CD4-positive, alpha-beta T cell (primary cell): ENCODE measurements at regions of chr2 and their contacts with region 1.

Region 1: GRCh38 chr2:84905181-84906107 is at the start of gene TMSB10:
- DNase-seq: peak; percentile 84 to 95 (median 92)
- ATAC-seq: peak; percentile 70
- H3K4me3 ChIP-seq: peak within 1 kb of the TSS; percentile 74
- H3K4me3 Mint-ChIP-seq: peak within 1 kb of the TSS; percentile 98
- H3K27ac ChIP-seq: peak within 1 kb of the TSS; percentile 57 to 85
- H3K27ac Mint-ChIP-seq: peak within 1 kb of the TSS; percentile 93
- H3K4me1 ChIP-seq: peaks cover 42% of the 10 kb centered on the region
- H3K4me1 Mint-ChIP-seq: peaks cover 76% of the 10 kb centered on the region
- H3K27me3 ChIP-seq: no peaks in the 10 kb centered on the region
- H3K27me3 Mint-ChIP-seq: no peaks in the 10 kb centered on the region
- CTCF ChIP-seq: no peak
- total RNA-seq, gene TMSB10: 1,969 to 2,001 TPM

Region 2: DNA sequence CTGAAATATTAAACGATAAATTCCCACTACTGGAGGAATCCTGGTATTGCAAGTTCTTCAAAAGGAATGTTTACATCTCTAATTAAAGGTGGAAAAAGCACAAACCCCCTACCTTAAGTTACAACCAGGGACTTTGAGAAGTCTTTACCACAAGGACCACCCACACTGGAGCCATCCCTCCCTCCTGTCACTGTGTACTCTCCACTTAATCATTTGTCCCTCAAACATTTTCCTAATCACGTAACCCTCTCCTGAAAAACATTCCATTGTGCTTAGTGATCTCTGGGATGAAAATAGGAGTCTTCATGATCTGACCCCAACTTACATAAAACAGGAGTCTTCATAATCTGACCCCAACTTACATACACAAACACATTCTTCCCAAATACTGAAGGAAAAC is 532.1 kb before region 1 on chr2:
- CTCF ChIA-PET with region 1: no interaction called
- POLR2A ChIA-PET with region 1: no interaction called
- intact Hi-C with region 1: no loop called
- DNase-seq: no peak
- ATAC-seq: no peak
- H3K4me3 ChIP-seq: no peak overlapping the region
- H3K4me3 Mint-ChIP-seq: no peak overlapping the region
- H3K27ac ChIP-seq: no peak overlapping the region
- H3K27ac Mint-ChIP-seq: no peak overlapping the region
- H3K4me1 ChIP-seq: no peaks in the 10 kb centered on the region
- H3K4me1 Mint-ChIP-seq: no peaks in the 10 kb centered on the region
- H3K27me3 ChIP-seq: peaks cover 2 to 13% of the 10 kb centered on the region in 2 experiments
- H3K27me3 Mint-ChIP-seq: peaks cover 31% of the 10 kb centered on the region
- CTCF ChIP-seq: no peak

Region 3: DNA sequence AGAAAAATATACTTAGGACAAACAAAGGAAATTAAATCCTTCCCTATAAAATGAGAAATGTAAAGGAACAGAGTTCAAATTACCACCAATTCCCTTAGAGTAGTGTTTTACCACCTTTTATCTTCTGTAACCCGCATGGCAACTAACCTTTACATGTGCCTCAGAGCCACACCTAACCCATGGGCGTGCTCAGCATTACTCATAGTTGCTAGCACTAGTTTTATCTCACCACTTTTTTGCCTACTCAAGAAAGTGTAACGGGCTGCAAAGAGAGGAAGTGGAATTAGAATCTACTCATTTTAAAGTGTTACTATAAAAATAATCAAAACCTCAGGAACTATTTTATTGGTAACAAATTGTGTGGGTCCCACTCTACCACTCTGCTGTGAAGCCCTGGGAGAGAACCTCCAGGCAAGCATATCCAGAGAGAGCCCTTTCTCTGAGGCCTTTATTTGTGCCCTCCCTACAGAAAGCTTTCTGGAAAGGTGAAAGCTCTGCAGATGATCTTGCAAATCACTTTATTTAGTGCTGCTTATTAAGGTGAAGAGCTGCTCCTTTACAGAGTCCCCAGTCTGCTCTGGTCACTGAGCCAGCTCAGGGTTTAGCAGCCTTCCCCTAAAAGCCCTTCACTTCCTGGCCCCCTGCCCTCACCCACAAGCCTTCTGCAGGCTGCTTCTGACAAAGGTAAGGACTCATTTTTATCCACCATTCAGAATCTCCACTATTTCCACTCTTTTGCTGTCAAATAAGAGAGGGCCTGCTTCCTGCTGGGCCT is 123.3 kb before region 1 on chr2:
- CTCF ChIA-PET with region 1: no interaction called
- POLR2A ChIA-PET with region 1: interaction called, 10 read pairs
- intact Hi-C with region 1: no loop called
- DNase-seq: peak; percentile 25 to 91 (median 57)
- ATAC-seq: peak; percentile 83
- H3K4me3 ChIP-seq: no peak overlapping the region
- H3K4me3 Mint-ChIP-seq: peak overlapping the region; percentile 81
- H3K27ac ChIP-seq: peak overlapping the region; percentile 67 to 70
- H3K27ac Mint-ChIP-seq: peak overlapping the region; percentile 90
- H3K4me1 ChIP-seq: peaks cover 47% of the 10 kb centered on the region
- H3K4me1 Mint-ChIP-seq: peaks cover 93% of the 10 kb centered on the region
- H3K27me3 ChIP-seq: no peaks in the 10 kb centered on the region
- H3K27me3 Mint-ChIP-seq: no peaks in the 10 kb centered on the region
- CTCF ChIP-seq: no peak

Region 4: GRCh38 chr2:84846041-84846663 is 59.3 kb before region 1 on chr2:
- CTCF ChIA-PET with region 1: no interaction called
- POLR2A ChIA-PET with region 1: interaction called, 37 read pairs
- intact Hi-C with region 1: no loop called
- DNase-seq: peak in 9 of 14 experiments; percentile 22 to 87 (median 60)
- ATAC-seq: peak; percentile 66
- H3K4me3 ChIP-seq: no peak overlapping the region
- H3K4me3 Mint-ChIP-seq: peak overlapping the region; percentile 84
- H3K27ac ChIP-seq: peak overlapping the region; percentile 81 to 90
- H3K27ac Mint-ChIP-seq: peak overlapping the region; percentile 96
- H3K4me1 ChIP-seq: peaks cover 100% of the 10 kb centered on the region
- H3K4me1 Mint-ChIP-seq: peaks cover 95% of the 10 kb centered on the region
- H3K27me3 ChIP-seq: no peaks in the 10 kb centered on the region
- H3K27me3 Mint-ChIP-seq: no peaks in the 10 kb centered on the region
- CTCF ChIP-seq: no peak

Region 5: GRCh38 chr2:84865181-84865783 is 40.2 kb before region 1 on chr2:
- CTCF ChIA-PET with region 1: no interaction called
- POLR2A ChIA-PET with region 1: interaction called, 14 read pairs
- intact Hi-C with region 1: no loop called
- DNase-seq: peak in 5 of 14 experiments; percentile 15 to 73 (median 71)
- ATAC-seq: peak; percentile 65
- H3K4me3 ChIP-seq: no peak overlapping the region
- H3K4me3 Mint-ChIP-seq: peak overlapping the region; percentile 42
- H3K27ac ChIP-seq: peak overlapping the region in 1 of 2 donors; percentile 36
- H3K27ac Mint-ChIP-seq: peak overlapping the region; percentile 94
- H3K4me1 ChIP-seq: peaks cover 70% of the 10 kb centered on the region
- H3K4me1 Mint-ChIP-seq: peaks cover 97% of the 10 kb centered on the region
- H3K27me3 ChIP-seq: no peaks in the 10 kb centered on the region
- H3K27me3 Mint-ChIP-seq: no peaks in the 10 kb centered on the region
- CTCF ChIP-seq: peak; percentile 75

Region 6: DNA sequence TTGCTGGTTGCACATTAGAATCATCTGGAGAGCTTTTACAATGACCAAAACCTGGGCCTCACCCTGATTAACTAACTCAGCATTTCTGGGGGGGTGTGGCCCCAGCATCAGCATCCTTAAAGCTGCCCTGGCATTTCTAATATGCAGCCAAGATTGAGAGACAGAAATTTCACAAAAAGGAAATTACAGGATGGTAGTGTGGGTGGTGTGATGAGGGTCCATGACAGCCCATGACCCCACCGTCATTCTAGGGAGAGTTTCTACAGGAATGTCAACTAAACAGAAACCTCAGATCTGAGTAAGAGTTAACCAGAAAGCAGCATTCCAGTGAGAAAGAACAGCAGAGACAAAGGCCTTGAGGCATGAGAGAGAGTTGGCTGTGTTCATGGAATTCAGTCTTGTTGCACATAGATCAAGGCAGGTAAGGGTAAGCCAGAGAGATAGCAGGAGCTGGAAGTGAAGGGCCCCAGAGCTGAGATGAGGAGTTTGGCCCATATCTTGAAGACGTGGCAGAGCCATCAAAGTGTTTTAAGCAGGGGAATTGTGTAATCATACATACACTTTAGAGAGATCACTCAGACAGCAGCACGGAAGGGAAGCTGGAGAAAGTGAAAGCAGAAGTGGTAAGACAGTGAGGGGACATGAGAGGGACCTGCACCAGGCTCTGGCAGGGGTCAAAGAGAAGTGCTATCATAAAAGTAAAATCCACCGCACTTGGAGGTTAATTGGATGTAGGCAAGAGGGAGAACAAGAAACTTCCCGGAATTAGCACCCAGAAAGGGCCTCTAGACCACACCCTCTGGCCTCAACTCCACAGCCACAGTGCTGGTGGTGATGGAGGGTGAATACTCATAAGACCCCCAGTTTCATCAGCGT is 16.8 kb before region 1 on chr2:
- CTCF ChIA-PET with region 1: interaction called, 4 read pairs
- POLR2A ChIA-PET with region 1: interaction called, 215 read pairs
- intact Hi-C with region 1: loop called (anchors 2 kb)
- DNase-seq: peak in 10 of 14 experiments; percentile 29 to 89 (median 54)
- ATAC-seq: peak; percentile 95
- H3K4me3 ChIP-seq: peak overlapping the region; percentile 29
- H3K4me3 Mint-ChIP-seq: peak overlapping the region; percentile 77
- H3K27ac ChIP-seq: peak overlapping the region; percentile 75 to 76
- H3K27ac Mint-ChIP-seq: peak overlapping the region; percentile 93
- H3K4me1 ChIP-seq: peaks cover 28% of the 10 kb centered on the region
- H3K4me1 Mint-ChIP-seq: peaks cover 46% of the 10 kb centered on the region
- H3K27me3 ChIP-seq: no peaks in the 10 kb centered on the region
- H3K27me3 Mint-ChIP-seq: no peaks in the 10 kb centered on the region
- CTCF ChIP-seq: no peak

Region 7: DNA sequence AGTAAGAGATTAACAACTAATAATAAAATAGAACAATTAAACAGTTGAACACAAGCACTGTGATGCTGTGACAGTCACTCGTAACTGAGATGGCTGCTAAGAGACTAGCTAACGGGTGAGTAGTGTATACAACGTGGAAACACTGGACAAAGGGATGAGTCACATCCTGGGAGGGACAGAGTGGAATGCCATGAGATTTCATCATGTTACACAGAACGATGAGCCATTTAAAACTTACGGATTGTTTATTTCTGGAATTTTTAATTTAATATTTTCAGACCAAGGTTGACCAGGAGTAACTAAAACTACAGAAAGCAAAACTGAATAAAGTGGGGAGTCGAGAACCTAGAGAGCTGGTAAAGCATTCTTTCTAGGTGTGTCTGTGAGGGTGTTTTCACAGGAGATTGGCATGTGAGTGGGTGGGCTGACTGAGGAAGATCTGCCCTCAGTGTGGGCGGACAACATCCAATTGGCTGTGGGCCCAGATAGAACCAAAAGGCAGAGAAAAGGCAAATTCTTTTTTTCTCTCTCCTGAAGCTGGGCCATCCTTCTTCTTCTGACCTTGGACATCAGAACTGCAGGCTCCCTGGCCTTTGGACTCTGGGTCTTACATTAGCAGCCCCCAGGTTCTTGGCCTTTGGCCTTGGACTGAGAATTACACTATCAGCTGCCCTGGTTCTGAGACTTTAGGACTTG is 14.6 kb after region 1 on chr2:
- CTCF ChIA-PET with region 1: interaction called, 88 read pairs
- POLR2A ChIA-PET with region 1: interaction called, 147 read pairs
- intact Hi-C with region 1: loop called (anchors 1 kb)
- DNase-seq: peak in 4 of 14 experiments; percentile 37 to 60 (median 52)
- ATAC-seq: peak; percentile 63
- H3K4me3 ChIP-seq: no peak overlapping the region
- H3K4me3 Mint-ChIP-seq: peak overlapping the region; percentile 23
- H3K27ac ChIP-seq: peak overlapping the region; percentile 54 to 61
- H3K27ac Mint-ChIP-seq: peak overlapping the region; percentile 81
- H3K4me1 ChIP-seq: peaks cover 40% of the 10 kb centered on the region
- H3K4me1 Mint-ChIP-seq: peaks cover 43% of the 10 kb centered on the region
- H3K27me3 ChIP-seq: no peaks in the 10 kb centered on the region
- H3K27me3 Mint-ChIP-seq: no peaks in the 10 kb centered on the region
- CTCF ChIP-seq: no peak

Region 8: GRCh38 chr2:84946204-84947009 is 41.0 kb after region 1 on chr2:
- CTCF ChIA-PET with region 1: no interaction called
- POLR2A ChIA-PET with region 1: interaction called, 14 read pairs
- intact Hi-C with region 1: no loop called
- DNase-seq: peak in 12 of 14 experiments; percentile 15 to 80 (median 50)
- ATAC-seq: peak; percentile 83
- H3K4me3 ChIP-seq: peak overlapping the region; percentile 25
- H3K4me3 Mint-ChIP-seq: peak overlapping the region; percentile 30
- H3K27ac ChIP-seq: peak overlapping the region; percentile 43 to 53
- H3K27ac Mint-ChIP-seq: peak overlapping the region; percentile 81
- H3K4me1 ChIP-seq: peaks cover 23% of the 10 kb centered on the region
- H3K4me1 Mint-ChIP-seq: peaks cover 31% of the 10 kb centered on the region
- H3K27me3 ChIP-seq: no peaks in the 10 kb centered on the region
- H3K27me3 Mint-ChIP-seq: no peaks in the 10 kb centered on the region
- CTCF ChIP-seq: no peak